Activated T-helper 1 cell treated with anti-CD3 and anti-CD28 coated beads, Interleukin-12 subunit alpha, Interleukin-12 subunit beta, Interleukin-2, Interleukin-4 antibody, amounts not matched to agents 30 ng/mL and 10 ng/mL and 1 ng/mL, durations not matched to agents 14 hours and 24 hours and 36 hours (primary cell): ENCODE measurements at regions of chr9 and their contacts with region 1.

Region 1: DNA sequence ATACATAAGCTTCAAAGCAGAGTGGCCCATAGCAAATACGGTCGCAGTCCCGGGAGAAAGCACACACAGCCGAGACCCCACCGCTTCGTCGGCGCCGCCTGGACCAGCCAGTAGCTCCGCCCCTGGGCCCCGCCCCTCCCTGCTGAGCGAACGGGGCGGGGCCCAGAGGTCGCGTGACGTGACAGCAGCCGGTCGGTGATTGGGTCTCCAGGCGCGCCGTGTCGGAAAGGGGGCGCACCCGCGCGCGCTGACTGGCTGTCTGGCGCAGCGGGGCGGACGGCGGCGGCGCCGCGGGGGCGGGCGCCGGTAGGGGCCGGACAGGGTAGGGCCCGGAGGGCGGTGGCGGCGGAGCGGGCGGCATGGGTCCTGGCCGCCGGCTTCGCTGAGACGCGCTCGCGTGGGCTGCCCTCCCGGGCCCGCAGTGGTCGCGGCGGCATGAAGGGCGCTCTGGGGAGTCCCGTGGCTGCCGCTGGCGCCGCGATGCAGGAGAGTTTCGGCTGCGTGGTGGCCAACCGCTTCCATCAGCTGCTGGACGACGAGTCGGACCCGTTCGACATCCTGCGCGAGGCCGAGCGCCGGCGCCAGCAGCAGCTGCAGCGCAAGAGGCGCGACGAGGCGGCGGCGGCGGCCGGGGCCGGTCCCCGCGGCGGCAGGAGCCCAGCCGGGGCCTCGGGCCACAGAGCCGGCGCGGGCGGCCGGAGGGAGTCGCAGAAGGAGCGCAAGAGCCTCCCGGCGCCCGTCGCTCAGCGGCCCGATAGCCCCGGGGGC is at the start of gene HABP4:
- DNase-seq: peak; percentile 94
- H3K4me3 Mint-ChIP-seq: peak within 1 kb of the TSS; percentile 87
- H3K27ac Mint-ChIP-seq: peak within 1 kb of the TSS; percentile 55
- H3K4me1 Mint-ChIP-seq: peaks cover 23% of the 10 kb centered on the region
- H3K27me3 Mint-ChIP-seq: peaks cover 29% of the 10 kb centered on the region
- total RNA-seq, gene HABP4: 10.8 and 11.1 TPM in 2 replicates

Region 2: GRCh38 chr9:96484521-96484931 is 34.5 kb after region 1 on chr9:
- intact Hi-C with region 1: loop called (anchors 2 kb)
- DNase-seq: no peak
- H3K4me3 Mint-ChIP-seq: no peak overlapping the region
- H3K27ac Mint-ChIP-seq: no peak overlapping the region
- H3K4me1 Mint-ChIP-seq: peaks cover 16% of the 10 kb centered on the region
- H3K27me3 Mint-ChIP-seq: no peaks in the 10 kb centered on the region

Region 3: GRCh38 chr9:96553070-96553469 is 103.0 kb after region 1 on chr9:
- intact Hi-C with region 1: loop called (anchors 5 kb)
- DNase-seq: no peak
- H3K4me3 Mint-ChIP-seq: no peak overlapping the region
- H3K27ac Mint-ChIP-seq: no peak overlapping the region
- H3K4me1 Mint-ChIP-seq: peaks cover 39% of the 10 kb centered on the region
- H3K27me3 Mint-ChIP-seq: peaks cover 5% of the 10 kb centered on the region

Region 4: GRCh38 chr9:96596601-96597111 is 146.6 kb after region 1 on chr9:
- intact Hi-C with region 1: no loop called
- DNase-seq: no peak
- H3K4me3 Mint-ChIP-seq: no peak overlapping the region
- H3K27ac Mint-ChIP-seq: no peak overlapping the region
- H3K4me1 Mint-ChIP-seq: no peaks in the 10 kb centered on the region
- H3K27me3 Mint-ChIP-seq: peaks cover 9% of the 10 kb centered on the region